ENCODE measurements at regions of chr3 and their contacts with region 1.

Region 1: DNA sequence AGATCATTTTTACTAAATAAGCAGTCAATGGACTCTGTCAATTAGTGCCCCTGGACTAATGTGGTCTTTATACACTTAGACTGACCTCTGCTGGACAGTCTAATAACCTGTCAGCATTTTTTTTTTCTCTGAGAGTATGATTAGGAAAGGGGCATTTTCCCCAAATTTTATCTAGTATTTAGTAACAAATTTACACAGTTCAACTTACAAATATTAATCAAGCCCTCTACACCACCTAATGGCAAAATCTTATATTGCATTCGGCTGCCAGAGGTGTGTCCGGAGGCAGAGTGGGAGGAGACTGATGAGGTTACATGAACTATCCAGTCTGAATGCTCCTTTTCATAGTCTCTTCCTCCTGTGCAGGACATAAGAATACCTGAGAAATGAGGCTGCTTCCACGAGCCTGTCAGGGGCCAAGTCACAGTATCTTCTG is 36.0 kb upstream of the COLQ start:
- DNase-seq: peak; percentile 90
- H3K4me3 ChIP-seq: no peak overlapping the region
- H3K27ac ChIP-seq: no peak overlapping the region
- H3K4me1 ChIP-seq: peaks cover 0 to 9% (median 0%) of the 10 kb centered on the region in 4 donors
- H3K27me3 ChIP-seq: no peaks in the 10 kb centered on the region
- CTCF ChIP-seq: peak; percentile 59 to 70 (median 61)
- EP300 ChIP-seq: no peak
- POLR2A ChIP-seq: no peak

Region 2: GRCh38 chr3:15113463-15113862 is 444.1 kb before region 1 on chr3:
- intact Hi-C with region 1: loop called (anchors 10 kb)
- DNase-seq: no peak
- H3K4me3 ChIP-seq: no peak overlapping the region
- H3K27ac ChIP-seq: no peak overlapping the region
- H3K4me1 ChIP-seq: peaks cover 0 to under 1% (median 0%) of the 10 kb centered on the region in 4 donors
- H3K27me3 ChIP-seq: peaks cover 0 to 5% (median 0%) of the 10 kb centered on the region in 4 donors
- CTCF ChIP-seq: no peak
- EP300 ChIP-seq: no peak
- POLR2A ChIP-seq: no peak

Region 3: DNA sequence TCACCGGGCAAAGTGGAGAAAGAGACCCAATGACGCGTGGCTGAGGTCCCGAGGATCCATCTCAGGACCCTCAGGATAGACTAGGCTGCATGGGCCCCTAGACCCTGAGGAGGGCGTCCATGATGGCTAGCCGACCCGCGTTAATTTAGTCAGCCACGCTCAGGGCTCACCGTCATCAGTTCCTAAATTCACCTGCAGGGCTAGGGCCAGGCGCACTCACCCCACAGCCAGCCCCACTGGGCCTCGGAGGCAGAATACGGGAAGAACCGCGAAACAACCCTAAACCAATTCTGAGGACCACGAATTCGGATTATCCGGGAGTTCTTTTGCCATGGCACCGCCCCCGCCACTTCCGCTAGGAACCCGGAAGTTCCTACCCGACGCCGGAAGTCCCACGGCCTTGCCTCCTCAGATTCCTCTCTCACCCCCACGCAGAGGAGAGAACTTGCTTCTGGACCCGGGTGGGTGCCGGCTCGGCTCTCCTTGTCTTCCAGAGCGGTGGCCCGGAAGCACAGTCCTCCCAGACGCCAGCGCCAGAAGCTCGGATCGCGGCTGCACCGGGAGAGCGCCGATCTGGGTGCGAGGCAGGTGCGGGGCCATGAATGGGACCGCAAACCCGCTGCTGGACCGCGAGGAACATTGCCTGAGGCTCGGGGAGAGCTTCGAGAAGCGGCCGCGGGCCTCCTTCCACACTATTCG is 130.2 kb before region 1 on chr3 and contains the starts of genes EAF1 and METTL6:
- intact Hi-C with region 1: loop called (anchors 5 kb)
- DNase-seq: peak; percentile 95
- H3K4me3 ChIP-seq: peak within 1 kb of the TSS; percentile 72 to 93 (median 83)
- H3K27ac ChIP-seq: peak within 1 kb of the TSS; percentile 76 to 84 (median 81)
- H3K4me1 ChIP-seq: peaks cover 24 to 64% (median 42%) of the 10 kb centered on the region in 4 donors
- H3K27me3 ChIP-seq: no peaks in the 10 kb centered on the region
- CTCF ChIP-seq: peak in 2 of 3 experiments; percentile 4 to 42
- EP300 ChIP-seq: no peak
- POLR2A ChIP-seq: no peak
- total RNA-seq, gene EAF1: 12.0 to 21.7 (median 15.4) TPM
- total RNA-seq, gene METTL6: 10.9 to 18.7 (median 11.8) TPM

Region 4: DNA sequence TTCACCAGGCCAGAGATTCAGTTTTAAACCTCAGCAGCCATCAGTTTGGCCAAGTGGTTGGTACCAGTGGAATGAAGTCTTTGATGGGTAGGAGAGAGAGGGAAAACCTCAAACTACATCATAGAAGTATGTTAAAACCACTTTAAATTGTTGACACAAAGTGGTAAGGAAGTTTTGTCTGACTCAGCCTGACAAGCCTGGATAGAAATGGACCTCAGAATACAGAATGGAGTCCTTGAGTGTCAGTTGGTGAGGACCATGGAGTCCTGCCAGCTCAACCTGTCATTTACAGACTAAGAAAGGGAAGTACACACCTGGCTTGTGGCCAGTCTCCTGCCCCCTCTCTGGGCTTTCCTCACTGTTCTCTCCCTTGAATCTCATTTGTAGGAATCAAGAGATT is 118.1 kb before region 1 on chr3:
- intact Hi-C with region 1: no loop called
- DNase-seq: no peak
- H3K4me3 ChIP-seq: no peak overlapping the region
- H3K27ac ChIP-seq: no peak overlapping the region
- H3K4me1 ChIP-seq: peaks cover 0 to 5% (median 0%) of the 10 kb centered on the region in 4 donors
- H3K27me3 ChIP-seq: no peaks in the 10 kb centered on the region
- CTCF ChIP-seq: no peak
- EP300 ChIP-seq: no peak
- POLR2A ChIP-seq: no peak

Region 5: GRCh38 chr3:15478325-15478979 is 79.1 kb before region 1 on chr3:
- intact Hi-C with region 1: no loop called
- DNase-seq: no peak
- H3K4me3 ChIP-seq: no peak overlapping the region
- H3K27ac ChIP-seq: no peak overlapping the region
- H3K4me1 ChIP-seq: peaks cover 0 to 9% (median 3%) of the 10 kb centered on the region in 4 donors
- H3K27me3 ChIP-seq: no peaks in the 10 kb centered on the region
- CTCF ChIP-seq: no peak
- EP300 ChIP-seq: no peak
- POLR2A ChIP-seq: no peak

Region 6: DNA sequence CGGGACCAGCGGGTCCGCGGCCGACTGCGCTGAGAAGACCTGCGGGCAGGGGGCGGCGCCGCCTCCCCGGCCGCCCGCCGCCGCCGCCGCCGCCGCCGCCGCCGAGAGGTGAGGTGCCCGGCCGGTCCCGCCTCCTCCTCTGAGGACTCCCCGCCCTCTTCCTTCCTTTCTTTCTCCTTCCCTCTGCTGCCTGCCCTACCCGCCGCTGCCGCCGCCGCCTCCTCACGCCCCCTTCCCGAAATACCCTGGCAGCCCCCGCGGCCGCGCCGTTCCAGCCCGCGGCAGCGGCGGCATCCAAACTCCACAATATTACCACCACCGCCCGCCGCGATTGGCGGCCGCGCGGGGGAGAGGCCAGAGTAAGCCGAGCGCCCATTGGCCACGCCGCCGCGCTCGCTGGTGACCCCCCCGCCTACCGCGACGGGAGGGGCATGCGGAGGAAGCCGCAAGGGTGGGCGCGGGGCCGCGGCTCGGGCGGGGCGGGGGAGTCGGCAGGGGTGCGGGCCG is 302.0 kb after region 1 on chr3:
- intact Hi-C with region 1: no loop called
- DNase-seq: no peak
- H3K4me3 ChIP-seq: peak overlapping the region; percentile 75 to 99 (median 95)
- H3K27ac ChIP-seq: peak overlapping the region; percentile 76 to 86 (median 78)
- H3K4me1 ChIP-seq: peaks cover 9 to 30% (median 24%) of the 10 kb centered on the region in 4 donors
- H3K27me3 ChIP-seq: no peaks in the 10 kb centered on the region
- CTCF ChIP-seq: no peak
- EP300 ChIP-seq: no peak
- POLR2A ChIP-seq: no peak

Measured in esophagus muscularis mucosa (tissue), 4 donors.